Endothelial cell of umbilical vein (primary cell): ENCODE measurements at regions of chr5 and their contacts with region 1.

Region 1: DNA sequence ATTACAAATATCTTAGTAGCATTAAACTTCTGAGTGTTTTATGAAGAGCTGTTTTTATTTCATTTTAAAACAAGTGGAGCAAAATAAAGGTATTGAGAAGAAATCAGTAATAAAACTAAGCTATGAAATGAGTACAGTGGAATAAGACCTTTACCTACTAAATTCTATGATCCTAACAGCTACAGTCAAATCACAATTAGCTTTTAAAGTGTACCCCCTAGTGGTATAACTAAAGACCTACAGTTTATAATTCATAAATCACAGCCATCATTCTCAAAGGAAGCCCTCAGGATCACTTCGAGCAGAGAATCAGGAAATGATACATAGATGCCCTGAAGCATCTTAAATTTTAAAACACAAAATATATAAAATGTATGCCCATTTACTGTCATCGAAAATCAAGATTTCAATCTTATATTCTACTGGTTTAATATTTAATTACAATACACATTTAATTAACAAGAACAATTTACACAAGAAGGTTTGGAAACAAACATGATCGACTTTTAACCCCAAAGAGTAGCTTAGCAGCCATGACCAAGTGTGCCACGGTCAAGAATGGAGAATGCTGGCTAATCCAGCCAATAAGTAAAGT is 12.3 kb downstream of the CCNH start:
- DNase-seq: peak; percentile 63
- H3K4me3 ChIP-seq: no peak overlapping the region
- H3K27ac ChIP-seq: peak overlapping the region; percentile 39
- H3K4me1 ChIP-seq: peaks cover 13% of the 10 kb centered on the region
- H3K27me3 ChIP-seq: no peaks in the 10 kb centered on the region
- CTCF ChIP-seq: peak; percentile 29 to 33
- POLR2A ChIP-seq: peak; percentile 36

Region 2: DNA sequence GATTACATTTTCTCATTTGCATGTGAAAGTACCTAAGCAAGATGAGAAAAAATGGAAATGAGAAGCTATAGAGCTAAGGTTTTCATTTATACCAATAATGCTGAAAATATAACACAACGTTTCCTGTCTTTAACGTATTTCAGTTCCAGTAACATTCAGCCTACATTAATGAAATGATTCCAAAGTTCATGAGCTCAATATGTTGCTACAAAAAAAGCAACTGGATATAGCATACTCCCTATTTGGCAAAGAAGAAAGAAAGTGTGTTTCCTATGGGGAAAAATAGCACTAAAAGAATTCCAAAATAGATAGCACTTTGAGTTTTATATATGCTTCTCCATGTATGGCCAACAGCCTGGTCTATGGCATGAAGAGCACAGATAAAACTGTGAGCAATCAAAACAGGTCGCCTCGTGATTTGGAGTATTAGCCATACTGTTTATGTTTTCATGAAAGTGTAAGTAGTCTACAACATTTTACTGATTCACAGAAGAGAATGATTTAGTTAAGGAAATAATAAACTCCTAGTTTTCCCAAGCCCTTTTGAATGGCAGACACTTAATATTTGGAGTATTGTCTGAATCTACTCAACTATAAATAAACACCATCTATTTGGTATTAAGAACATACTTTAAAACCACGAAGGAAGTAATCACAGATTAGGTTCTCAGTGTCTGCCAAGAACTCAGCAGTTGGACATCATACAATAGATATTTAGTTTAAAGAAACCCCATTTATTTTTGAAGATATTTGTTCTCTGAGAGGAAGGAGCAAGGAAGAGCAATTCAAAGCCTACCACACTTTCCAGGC is 391.4 kb before region 1 on chr5:
- CTCF ChIA-PET with region 1: interaction called, 11 read pairs
- POLR2A ChIA-PET with region 1: no interaction called
- dilution Hi-C with region 1: no loop called
- intact Hi-C with region 1: loop called (anchors 2 kb)
- DNase-seq: no peak
- H3K4me3 ChIP-seq: no peak overlapping the region
- H3K27ac ChIP-seq: no peak overlapping the region
- H3K4me1 ChIP-seq: no peaks in the 10 kb centered on the region
- H3K27me3 ChIP-seq: no peaks in the 10 kb centered on the region
- CTCF ChIP-seq: no peak
- POLR2A ChIP-seq: no peak

Region 3: GRCh38 chr5:87048156-87048555 is 352.2 kb before region 1 on chr5:
- CTCF ChIA-PET with region 1: no interaction called
- POLR2A ChIA-PET with region 1: no interaction called
- dilution Hi-C with region 1: no loop called
- intact Hi-C with region 1: loop called (anchors 1 kb)
- DNase-seq: no peak
- H3K4me3 ChIP-seq: no peak overlapping the region
- H3K27ac ChIP-seq: no peak overlapping the region
- H3K4me1 ChIP-seq: no peaks in the 10 kb centered on the region
- H3K27me3 ChIP-seq: peaks cover 3 to 16% of the 10 kb centered on the region in 2 experiments
- CTCF ChIP-seq: no peak
- POLR2A ChIP-seq: no peak

Region 4: DNA sequence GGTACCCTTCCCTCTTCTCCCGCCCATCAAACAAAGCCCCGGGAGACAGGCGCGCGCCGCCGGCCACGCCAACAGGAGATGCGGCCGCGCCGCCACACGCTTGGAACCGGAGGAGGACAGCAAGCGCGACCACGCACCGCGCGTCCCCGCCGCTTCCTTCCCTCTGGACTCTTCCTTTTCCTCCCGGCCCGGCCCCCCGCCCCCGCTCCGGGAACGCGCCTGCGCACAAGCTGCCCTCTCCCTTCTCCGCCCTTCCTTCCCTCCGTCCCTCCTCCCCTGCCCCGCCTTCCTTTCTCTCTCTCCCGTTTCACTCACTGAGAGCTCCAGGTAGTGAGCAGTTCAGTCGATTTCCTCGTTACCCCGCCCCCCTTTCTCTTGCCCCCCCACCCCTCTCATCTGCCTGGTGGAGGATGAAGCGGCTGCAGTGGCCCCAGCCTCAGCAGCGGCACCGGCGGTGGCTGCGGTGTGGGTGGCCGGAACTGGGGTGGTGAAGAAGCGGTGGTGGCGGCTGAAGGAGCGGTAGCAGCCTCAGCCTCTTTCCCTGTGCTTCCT is 132.8 kb before region 1 on chr5 and contains the start of gene RASA1:
- CTCF ChIA-PET with region 1: interaction called, 17 read pairs
- POLR2A ChIA-PET with region 1: interaction called, 3 read pairs
- dilution Hi-C with region 1: no loop called
- intact Hi-C with region 1: no loop called
- DNase-seq: peak; percentile 92
- H3K4me3 ChIP-seq: peak within 1 kb of the TSS; percentile 89 to 92 (median 92)
- H3K27ac ChIP-seq: peak within 1 kb of the TSS; percentile 77
- H3K4me1 ChIP-seq: peaks cover 13% of the 10 kb centered on the region
- H3K27me3 ChIP-seq: peaks cover 0 to 2% of the 10 kb centered on the region in 2 experiments
- CTCF ChIP-seq: no peak
- POLR2A ChIP-seq: peak; percentile 99
- total RNA-seq, gene RASA1: 42.0 and 42.7 TPM in 2 replicates